ENCODE measurements at regions of chr17 and their contacts with region 1.

Region 1: DNA sequence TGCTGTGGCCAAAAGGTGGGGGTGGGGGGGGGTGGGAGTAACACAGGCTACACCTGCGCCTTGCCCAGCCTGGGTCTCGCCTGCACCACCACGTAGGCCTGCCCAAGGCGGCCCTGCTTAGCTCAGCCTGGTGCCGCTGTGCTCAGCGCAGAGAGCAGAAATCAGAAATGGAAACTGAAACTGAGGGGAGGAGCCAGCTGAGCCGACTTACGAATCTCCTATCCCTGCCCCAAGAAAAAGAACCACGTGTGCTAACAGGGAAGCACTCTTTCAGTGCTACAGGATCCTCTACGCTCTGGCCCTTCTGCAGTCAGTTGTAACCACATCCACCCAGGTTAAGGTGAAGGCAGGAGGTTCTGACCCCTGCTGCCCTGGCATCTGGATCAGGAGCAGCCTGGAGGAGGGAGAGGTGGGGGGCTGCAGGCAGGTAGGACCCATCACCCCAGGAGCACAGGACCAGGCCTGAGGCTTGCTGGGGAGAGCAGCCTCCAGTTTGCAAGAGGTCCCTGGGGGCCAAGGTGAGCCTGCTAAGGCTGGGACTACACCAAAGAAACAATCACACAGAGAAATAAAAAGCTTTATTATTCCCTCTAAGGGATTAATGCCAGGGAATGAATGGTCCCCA is at the start of gene DHX58:
- DNase-seq: peak; percentile 91
- H3K4me3 ChIP-seq: peak within 1 kb of the TSS; percentile 24 to 77 (median 48)
- H3K27ac ChIP-seq: peak within 1 kb of the TSS; percentile 73 to 96 (median 92)
- H3K4me1 ChIP-seq: peaks cover 17 to 69% (median 51%) of the 10 kb centered on the region in 6 donors
- H3K27me3 ChIP-seq: no peaks in the 10 kb centered on the region
- CTCF ChIP-seq: no peak
- POLR2A ChIP-seq: peak in 1 of 3 donors; percentile 49
- total RNA-seq, gene DHX58: 23.0 to 30.9 (median 25.5) TPM

Region 2: GRCh38 chr17:41966463-41967140 is 146.1 kb before region 1 on chr17 and contains the start of gene CNP:
- intact Hi-C with region 1: loop called (anchors 5 kb)
- DNase-seq: peak; percentile 96
- H3K4me3 ChIP-seq: peak within 1 kb of the TSS; percentile 75 to 95 (median 88)
- H3K27ac ChIP-seq: peak within 1 kb of the TSS; percentile 81 to 93 (median 90)
- H3K4me1 ChIP-seq: peaks cover 13 to 69% (median 54%) of the 10 kb centered on the region in 6 donors
- H3K27me3 ChIP-seq: no peaks in the 10 kb centered on the region
- CTCF ChIP-seq: peak in 4 of 11 experiments; percentile 6 to 49 (median 36)
- POLR2A ChIP-seq: peak in 2 of 3 donors; percentile 27 to 59
- total RNA-seq, gene CNP: 29.2 to 49.8 (median 44.2) TPM

Region 3: DNA sequence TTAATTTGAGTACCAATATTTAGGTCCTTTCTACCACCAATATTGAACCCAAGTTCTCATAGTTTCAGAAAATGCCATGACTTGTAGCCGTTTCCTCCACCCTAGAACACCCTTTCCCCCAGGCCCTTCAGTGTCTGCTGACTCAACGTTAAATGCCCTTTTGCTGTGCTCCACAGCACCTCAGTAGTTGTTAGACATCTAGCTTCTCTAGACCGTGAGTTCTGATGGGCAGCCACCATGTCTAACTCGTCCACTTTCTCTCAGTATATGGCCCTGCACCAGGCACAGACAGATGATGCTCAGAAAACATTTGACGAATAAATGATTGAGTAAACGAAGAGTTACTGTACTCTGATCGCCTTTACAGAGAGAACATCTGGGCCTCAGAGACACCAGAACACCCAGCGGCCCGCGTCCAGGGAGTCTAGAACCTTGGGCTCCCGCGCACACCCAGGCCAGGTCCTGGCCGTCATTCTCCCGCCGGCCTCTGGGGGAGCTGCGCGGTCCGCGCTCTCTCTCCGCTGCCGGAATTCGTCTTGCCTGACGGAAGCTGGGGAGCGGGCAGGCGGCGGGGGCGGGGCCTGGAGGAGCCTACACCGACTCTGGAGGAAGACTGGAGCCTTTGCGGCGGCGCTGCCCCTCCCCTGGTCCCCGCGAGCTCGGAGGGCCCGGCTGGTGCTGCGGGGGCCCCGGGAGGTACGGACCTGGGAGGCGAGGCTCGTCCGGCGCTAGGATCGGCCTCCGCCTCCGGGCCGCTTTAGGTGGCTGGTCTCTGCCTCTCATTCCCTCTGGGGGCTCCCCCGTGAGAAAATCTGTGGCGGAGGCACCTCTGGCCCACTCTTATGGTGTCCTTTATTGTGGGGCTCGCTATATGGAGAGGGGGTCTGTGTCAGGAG is 92.9 kb before region 1 on chr17 and contains the start of gene NKIRAS2:
- intact Hi-C with region 1: loop called (anchors 5 kb)
- DNase-seq: peak; percentile 100
- H3K4me3 ChIP-seq: peak within 1 kb of the TSS; percentile 72 to 88 (median 79)
- H3K27ac ChIP-seq: peak within 1 kb of the TSS; percentile 76 to 95 (median 87)
- H3K4me1 ChIP-seq: peaks cover 32 to 91% (median 72%) of the 10 kb centered on the region in 6 donors
- H3K27me3 ChIP-seq: no peaks in the 10 kb centered on the region
- CTCF ChIP-seq: peak; percentile 87 to 99 (median 97)
- POLR2A ChIP-seq: no peak
- total RNA-seq, gene NKIRAS2: 20.7 to 38.8 (median 25.2) TPM

Region 4: GRCh38 chr17:42163113-42163512 is 50.4 kb after region 1 on chr17:
- intact Hi-C with region 1: no loop called
- DNase-seq: no peak
- H3K4me3 ChIP-seq: no peak overlapping the region
- H3K27ac ChIP-seq: no peak overlapping the region
- H3K4me1 ChIP-seq: peaks cover 0 to 16% (median 0%) of the 10 kb centered on the region in 6 donors
- H3K27me3 ChIP-seq: no peaks in the 10 kb centered on the region
- CTCF ChIP-seq: peak in 7 of 11 experiments; percentile 14 to 44 (median 35)
- POLR2A ChIP-seq: no peak

Region 5: GRCh38 chr17:42183741-42184711 is 71.4 kb after region 1 on chr17:
- intact Hi-C with region 1: loop called (anchors 10 kb)
- DNase-seq: peak; percentile 95
- H3K4me3 ChIP-seq: peak overlapping the region; percentile 36 to 81 (median 63)
- H3K27ac ChIP-seq: peak overlapping the region; percentile 59 to 92 (median 85)
- H3K4me1 ChIP-seq: peaks cover 26 to 83% (median 56%) of the 10 kb centered on the region in 6 donors
- H3K27me3 ChIP-seq: peaks cover 0 to 31% (median 5%) of the 10 kb centered on the region in 7 donors
- CTCF ChIP-seq: peak; percentile 53 to 99 (median 97)
- POLR2A ChIP-seq: peak in 1 of 3 donors; percentile 78

Measured in spleen (tissue), 13 donors.